ENCODE measurements at regions of chr5 and their contacts with region 1.

Region 1: GRCh38 chr5:140690941-140691924 is at the starts of genes HARS1 and HARS2:
- DNase-seq: peak; percentile 95
- ATAC-seq: peak; percentile 95
- H3K4me3 ChIP-seq: peak within 1 kb of the TSS; percentile 83
- H3K27ac ChIP-seq: peak within 1 kb of the TSS; percentile 92
- H3K4me1 ChIP-seq: peaks cover 2% of the 10 kb centered on the region; the same call in 1 of the 2 replicates
- H3K27me3 ChIP-seq: no peaks in the 10 kb centered on the region
- CTCF ChIP-seq: 0 out of 2 replicates have a peak, but pooled peaks have one; percentile 5
- POLR2A ChIP-seq: peak; percentile 84
- RAD21 ChIP-seq: no peak; the same call in 1 of the 2 replicates
- total RNA-seq, gene HARS1: 134 and 141 TPM in 2 replicates
- total RNA-seq, gene HARS2: 30.1 and 36.9 TPM in 2 replicates

Region 2: GRCh38 chr5:140664359-140665119 is 26.7 kb before region 1 on chr5 and contains the start of gene WDR55:
- CTCF ChIA-PET with region 1: no interaction called
- POLR2A ChIA-PET with region 1: no interaction called
- dilution Hi-C with region 1: no loop called
- in situ Hi-C with region 1: no loop called
- intact Hi-C with region 1: loop called (anchors 1 kb)
- DNase-seq: peak; percentile 88
- ATAC-seq: peak; percentile 97
- H3K4me3 ChIP-seq: peak within 1 kb of the TSS; percentile 86
- H3K27ac ChIP-seq: peak within 1 kb of the TSS; percentile 92
- H3K4me1 ChIP-seq: peaks cover 3% of the 10 kb centered on the region; the same call in 1 of the 2 replicates
- H3K27me3 ChIP-seq: no peaks in the 10 kb centered on the region
- CTCF ChIP-seq: no peak; the same call in 1 of the 2 replicates
- POLR2A ChIP-seq: peak; percentile 91
- RAD21 ChIP-seq: 0 out of 2 replicates have a peak, but pooled peaks have one; percentile 5
- total RNA-seq, gene WDR55: 19.2 and 20.4 TPM in 2 replicates

Measured in IMR-90 (cell line).